Panc1 (cell line): ENCODE measurements at regions of chr1 and their contacts with region 1.

Region 1: DNA sequence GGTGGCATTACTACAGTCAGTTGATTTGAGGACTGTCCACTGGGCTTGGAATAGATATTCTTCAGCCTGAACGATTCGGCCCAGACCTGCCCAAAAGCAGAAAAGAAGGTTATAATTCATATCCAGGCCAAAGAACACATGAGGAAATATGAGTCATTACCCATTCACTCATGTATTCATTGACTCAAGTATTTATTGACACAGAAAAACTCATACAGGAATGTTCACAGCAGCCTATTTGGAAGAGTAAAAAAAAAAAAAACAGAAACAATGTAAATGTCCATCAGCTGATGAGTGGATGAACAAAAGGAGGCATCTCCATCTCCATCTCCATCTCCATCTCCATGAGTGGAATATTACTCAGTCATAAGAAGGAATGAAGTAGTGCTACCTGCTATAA is 15.9 kb downstream of the ZMYND12 start:
- DNase-seq: peak; percentile 53
- ATAC-seq: peak; percentile 74; the same call in 1 of the 2 replicates
- H3K4me3 ChIP-seq: no peak overlapping the region
- H3K27ac ChIP-seq: no peak overlapping the region
- H3K4me1 ChIP-seq: no peaks in the 10 kb centered on the region
- H3K27me3 ChIP-seq: no peaks in the 10 kb centered on the region
- CTCF ChIP-seq: no peak

Region 2: GRCh38 chr1:41618091-41618825 is 821.7 kb before region 1 on chr1:
- CTCF ChIA-PET with region 1: no interaction called
- POLR2A ChIA-PET with region 1: no interaction called
- in situ Hi-C with region 1: no loop called
- intact Hi-C with region 1: no loop called
- DNase-seq: no peak
- ATAC-seq: no peak
- H3K4me3 ChIP-seq: no peak overlapping the region
- H3K27ac ChIP-seq: no peak overlapping the region
- H3K4me1 ChIP-seq: no peaks in the 10 kb centered on the region
- H3K27me3 ChIP-seq: no peaks in the 10 kb centered on the region
- CTCF ChIP-seq: no peak

Region 3: DNA sequence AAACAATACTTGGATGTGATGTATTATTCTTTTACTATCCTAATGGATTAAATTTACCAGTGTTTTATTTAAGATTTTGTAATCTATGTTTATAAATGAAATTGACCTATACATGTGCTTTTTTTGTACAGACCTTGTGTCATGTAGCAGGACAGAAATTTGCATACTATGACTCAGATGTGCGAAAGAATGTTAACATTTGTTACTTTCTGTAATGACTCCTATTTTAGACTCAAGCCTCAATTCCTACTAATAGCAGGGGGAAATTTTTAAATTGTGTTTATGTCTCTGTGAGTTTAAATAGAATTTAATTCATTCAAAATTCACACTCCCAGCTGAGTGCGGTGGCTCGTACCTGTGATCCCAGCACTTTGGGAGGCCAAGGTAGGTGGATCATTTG is 81.1 kb before region 1 on chr1:
- CTCF ChIA-PET with region 1: no interaction called
- POLR2A ChIA-PET with region 1: no interaction called
- in situ Hi-C with region 1: no loop called
- intact Hi-C with region 1: no loop called
- DNase-seq: no peak
- ATAC-seq: no peak
- H3K4me3 ChIP-seq: no peak overlapping the region
- H3K27ac ChIP-seq: no peak overlapping the region
- H3K4me1 ChIP-seq: no peaks in the 10 kb centered on the region
- H3K27me3 ChIP-seq: no peaks in the 10 kb centered on the region; the same call in 1 of the 2 replicates
- CTCF ChIP-seq: no peak

Region 4: DNA sequence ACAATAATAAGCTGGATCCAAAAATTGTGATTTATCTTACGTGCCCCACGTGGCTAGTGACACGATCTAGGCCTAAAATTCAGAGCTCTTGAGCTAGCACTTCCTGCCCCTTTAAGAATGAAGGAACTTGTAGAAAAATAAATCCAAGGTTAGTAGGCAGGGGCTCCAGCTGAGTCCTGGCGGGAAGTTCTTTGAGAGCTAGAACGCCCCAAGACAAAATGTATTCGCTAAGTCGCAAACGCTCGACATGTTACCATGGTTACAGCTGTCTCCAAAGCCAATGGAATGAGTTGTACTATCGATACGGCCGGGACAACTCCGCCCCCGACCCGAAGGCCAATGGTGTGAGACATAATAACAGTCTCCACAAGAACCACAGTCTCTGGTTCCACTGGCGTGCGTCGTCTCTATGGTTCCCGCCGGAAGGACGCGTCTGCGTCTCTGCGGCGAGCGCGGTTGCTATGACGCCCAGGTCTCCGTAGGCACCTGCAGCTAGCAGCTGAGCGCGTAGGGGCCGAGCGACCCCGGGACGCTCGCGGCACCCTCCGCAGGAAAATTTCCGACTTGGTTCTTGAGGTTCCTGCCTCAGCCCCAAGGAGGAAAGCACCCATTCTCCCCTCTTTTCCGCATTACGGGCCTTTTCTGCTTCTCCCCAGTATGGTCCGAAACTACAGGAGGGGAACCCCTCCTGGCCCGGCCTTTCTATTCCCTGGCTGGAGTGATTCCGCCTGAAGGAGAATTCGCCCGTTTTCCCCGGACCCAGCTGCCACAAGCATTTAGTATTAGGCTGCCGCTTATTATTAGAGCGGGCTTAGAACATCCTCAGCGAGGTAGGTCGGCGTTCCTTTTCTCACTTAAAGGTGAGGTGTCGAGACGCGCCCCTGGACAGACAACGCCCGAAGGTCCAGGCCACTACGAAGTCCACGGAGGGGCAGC is 23.2 kb after region 1 on chr1 and contains the start of gene CCDC30:
- CTCF ChIA-PET with region 1: no interaction called
- POLR2A ChIA-PET with region 1: no interaction called
- in situ Hi-C with region 1: no loop called
- intact Hi-C with region 1: no loop called
- DNase-seq: peak; percentile 97
- ATAC-seq: peak; percentile 100
- H3K4me3 ChIP-seq: peak within 1 kb of the TSS; percentile 78 to 93
- H3K27ac ChIP-seq: peak within 1 kb of the TSS; percentile 80
- H3K4me1 ChIP-seq: peaks cover 18% of the 10 kb centered on the region
- H3K27me3 ChIP-seq: no peaks in the 10 kb centered on the region
- CTCF ChIP-seq: no peak
- total RNA-seq, gene CCDC30: 1.3 TPM

Region 5: DNA sequence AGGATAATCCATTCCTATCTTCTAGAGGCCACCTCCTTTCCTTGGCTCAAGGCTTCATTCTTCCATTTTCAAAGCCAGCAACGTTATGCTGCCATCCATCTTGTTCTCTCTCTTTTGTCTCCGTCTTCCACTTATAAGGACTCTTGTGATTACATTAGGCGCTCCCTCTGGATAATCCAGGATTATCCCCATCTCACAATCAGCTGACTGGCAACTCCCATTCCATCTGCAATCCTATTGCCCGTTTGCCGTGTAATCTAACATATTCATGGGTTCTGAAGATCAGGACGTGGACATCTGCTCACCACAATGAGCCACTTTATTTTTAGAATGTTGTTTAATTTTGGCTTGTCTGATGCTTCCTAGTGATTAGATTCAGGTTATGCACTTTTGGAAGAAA is 642.8 kb after region 1 on chr1:
- CTCF ChIA-PET with region 1: interaction called, 16 read pairs
- POLR2A ChIA-PET with region 1: no interaction called
- in situ Hi-C with region 1: no loop called
- intact Hi-C with region 1: no loop called
- DNase-seq: no peak
- ATAC-seq: no peak
- H3K4me3 ChIP-seq: no peak overlapping the region
- H3K27ac ChIP-seq: no peak overlapping the region
- H3K4me1 ChIP-seq: no peaks in the 10 kb centered on the region
- H3K27me3 ChIP-seq: no peaks in the 10 kb centered on the region
- CTCF ChIP-seq: no peak